Posterior vena cava (tissue), 2 donors: ENCODE measurements at regions of chr18 and their contacts with region 1.

Region 1: GRCh38 chr18:23629444-23629946 is 33.2 kb downstream of the ANKRD29 start:
- DNase-seq: no peak

Region 2: DNA sequence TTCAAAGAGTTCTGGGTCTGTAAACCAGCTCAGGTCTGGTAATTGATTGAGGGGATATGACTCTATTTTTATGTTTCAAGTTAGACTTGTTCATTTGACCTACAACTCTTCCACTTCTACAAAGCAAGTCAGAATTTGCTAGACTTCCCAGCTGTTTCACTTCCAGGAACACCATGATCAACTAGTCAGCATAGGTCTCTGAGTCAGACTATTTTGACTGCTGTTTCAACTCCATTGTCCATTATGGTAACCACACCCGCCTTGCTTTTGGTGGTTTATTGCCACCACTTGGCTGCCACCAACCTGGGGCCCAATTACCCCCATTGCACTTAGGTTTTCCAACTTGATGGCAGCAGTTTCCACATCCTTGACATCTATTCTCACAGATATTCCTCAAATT is 176.4 kb after region 1 on chr18:
- intact Hi-C with region 1: loop called (anchors 5 to 10 kb)
- DNase-seq: no peak

Region 3: GRCh38 chr18:25164848-25165811 is 1535.6 kb after region 1 on chr18:
- intact Hi-C with region 1: no loop called
- DNase-seq: no peak